T-cell (primary cell): ENCODE measurements at regions of chr11 and their contacts with region 1.

Region 1: GRCh38 chr11:94681852-94682251 is 86.3 kb upstream of the AMOTL1 start:
- DNase-seq: no peak
- ATAC-seq: no peak
- H3K4me3 ChIP-seq: no peak overlapping the region
- H3K4me3 Mint-ChIP-seq: no peak overlapping the region
- H3K27ac ChIP-seq: no peak overlapping the region
- H3K27ac Mint-ChIP-seq: no peak overlapping the region
- H3K4me1 ChIP-seq: no peaks in the 10 kb centered on the region
- H3K4me1 Mint-ChIP-seq: no peaks in the 10 kb centered on the region
- H3K27me3 ChIP-seq: peaks cover 0 to 9% of the 10 kb centered on the region in 2 experiments
- H3K27me3 Mint-ChIP-seq: peaks cover 15 to 18% of the 10 kb centered on the region in 2 donors

Region 2: DNA sequence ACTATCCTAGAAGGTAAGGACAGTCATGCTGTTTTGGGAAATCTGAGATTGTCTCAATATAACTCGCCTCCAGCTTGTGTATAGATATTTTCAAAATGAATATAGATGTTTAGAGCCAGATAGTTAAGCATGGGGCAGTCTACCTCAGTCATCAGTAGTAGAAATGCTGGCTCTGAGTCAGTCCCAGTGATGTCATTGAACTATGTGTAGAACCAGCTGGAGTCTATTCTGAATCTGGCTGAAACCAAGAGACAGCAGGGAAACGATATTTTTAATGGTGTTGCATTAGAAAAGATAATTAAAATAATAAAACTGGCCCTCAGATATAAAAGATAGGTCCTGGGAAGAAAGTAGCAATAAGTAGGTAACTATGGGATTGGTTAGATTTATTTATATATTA is 88.8 kb before region 1 on chr11:
- CTCF ChIA-PET with region 1: no interaction called
- POLR2A ChIA-PET with region 1: no interaction called
- DNase-seq: no peak
- ATAC-seq: no peak
- H3K4me3 ChIP-seq: no peak overlapping the region
- H3K4me3 Mint-ChIP-seq: no peak overlapping the region
- H3K27ac ChIP-seq: no peak overlapping the region
- H3K27ac Mint-ChIP-seq: no peak overlapping the region
- H3K4me1 ChIP-seq: no peaks in the 10 kb centered on the region
- H3K4me1 Mint-ChIP-seq: no peaks in the 10 kb centered on the region
- H3K27me3 ChIP-seq: no peaks in the 10 kb centered on the region
- H3K27me3 Mint-ChIP-seq: no peaks in the 10 kb centered on the region

Region 3: GRCh38 chr11:94721565-94722292 is 39.9 kb after region 1 on chr11:
- CTCF ChIA-PET with region 1: no interaction called
- POLR2A ChIA-PET with region 1: no interaction called
- DNase-seq: no peak
- ATAC-seq: no peak
- H3K4me3 ChIP-seq: no peak overlapping the region
- H3K4me3 Mint-ChIP-seq: no peak overlapping the region
- H3K27ac ChIP-seq: no peak overlapping the region
- H3K27ac Mint-ChIP-seq: no peak overlapping the region
- H3K4me1 ChIP-seq: no peaks in the 10 kb centered on the region
- H3K4me1 Mint-ChIP-seq: no peaks in the 10 kb centered on the region
- H3K27me3 ChIP-seq: peaks cover 2% of the 10 kb centered on the region in 2 experiments
- H3K27me3 Mint-ChIP-seq: peaks cover 16 to 24% of the 10 kb centered on the region in 2 donors

Region 4: DNA sequence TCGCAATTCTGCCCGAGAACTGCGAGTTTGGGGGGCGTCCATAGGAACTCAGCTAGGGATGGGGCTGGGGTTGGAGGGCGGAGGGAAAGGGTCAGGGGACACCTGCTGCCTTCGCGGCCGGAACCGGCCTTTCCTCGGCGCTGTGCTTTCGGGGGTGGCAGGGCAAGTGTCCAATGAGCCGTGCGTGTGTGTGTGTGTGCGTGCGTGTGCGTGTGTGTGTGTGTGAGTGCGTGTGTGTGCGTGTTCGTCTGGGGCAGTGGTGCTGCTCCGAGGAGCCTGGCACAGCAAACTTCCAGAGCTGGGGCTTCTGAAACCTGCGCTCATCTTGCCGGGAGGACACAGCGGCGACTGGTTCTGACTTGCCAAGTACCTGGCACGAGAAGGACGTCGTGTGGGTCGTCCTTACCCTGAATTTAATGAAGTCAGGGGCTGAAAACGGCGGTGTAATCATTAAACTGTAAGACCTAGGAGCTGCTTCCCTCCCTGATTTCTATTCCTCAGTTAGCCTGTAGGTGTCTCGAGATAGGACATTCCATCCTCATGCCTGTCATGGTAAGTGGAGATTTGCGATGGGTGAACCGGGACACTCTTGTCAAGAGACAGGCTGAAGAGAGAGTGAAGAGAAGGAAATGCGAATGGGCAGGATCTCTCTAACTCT is 59.3 kb after region 1 on chr11:
- CTCF ChIA-PET with region 1: no interaction called
- POLR2A ChIA-PET with region 1: interaction called in 1 of 2 experiments, 10 read pairs
- DNase-seq: peak in 1 of 35 experiments; percentile 5
- ATAC-seq: peak in 1 of 4 experiments; percentile 41
- H3K4me3 ChIP-seq: peak overlapping the region in 1 of 2 donors; percentile 79
- H3K4me3 Mint-ChIP-seq: peak overlapping the region; percentile 40 to 67 (median 49)
- H3K27ac ChIP-seq: no peak overlapping the region
- H3K27ac Mint-ChIP-seq: no peak overlapping the region
- H3K4me1 ChIP-seq: peaks cover 8 to 9% of the 10 kb centered on the region in 2 experiments
- H3K4me1 Mint-ChIP-seq: peaks cover 14% of the 10 kb centered on the region in 3 donors
- H3K27me3 ChIP-seq: peaks cover 12 to 35% of the 10 kb centered on the region in 2 experiments
- H3K27me3 Mint-ChIP-seq: peaks cover 31 to 42% of the 10 kb centered on the region in 2 donors